WTC11 (cell line): ENCODE measurements at regions of chr4 and their contacts with region 1.

Region 1: GRCh38 chr4:139301113-139301820 is at the start of gene NAA15:
- DNase-seq: peak; percentile 97
- ATAC-seq: peak; percentile 97
- H3K4me3 Mint-ChIP-seq: peak within 1 kb of the TSS; percentile 99
- H3K27ac Mint-ChIP-seq: peak within 1 kb of the TSS; percentile 99
- H3K4me1 Mint-ChIP-seq: peaks cover 35% of the 10 kb centered on the region
- H3K27me3 Mint-ChIP-seq: peaks cover 2% of the 10 kb centered on the region; the same call in 1 of the 2 replicates
- CTCF ChIP-seq: no peak
- total RNA-seq, gene NAA15: 81.4 to 98.9 TPM (median 81.6 TPM) in 3 replicates

Region 2: GRCh38 chr4:138507522-138507921 is 793.7 kb before region 1 on chr4:
- CTCF ChIA-PET with region 1: no interaction called
- POLR2A ChIA-PET with region 1: no interaction called
- DNase-seq: no peak
- ATAC-seq: no peak
- H3K4me3 Mint-ChIP-seq: no peak overlapping the region
- H3K27ac Mint-ChIP-seq: no peak overlapping the region
- H3K4me1 Mint-ChIP-seq: no peaks in the 10 kb centered on the region
- H3K27me3 Mint-ChIP-seq: no peaks in the 10 kb centered on the region
- CTCF ChIP-seq: no peak

Region 3: GRCh38 chr4:139153420-139154133 is 147.7 kb before region 1 on chr4:
- CTCF ChIA-PET with region 1: interaction called, 6 read pairs
- POLR2A ChIA-PET with region 1: interaction called, 10 read pairs
- DNase-seq: no peak
- ATAC-seq: peak; percentile 62
- H3K4me3 Mint-ChIP-seq: peak overlapping the region; percentile 22
- H3K27ac Mint-ChIP-seq: peak overlapping the region; percentile 97
- H3K4me1 Mint-ChIP-seq: peaks cover 68% of the 10 kb centered on the region
- H3K27me3 Mint-ChIP-seq: no peaks in the 10 kb centered on the region
- CTCF ChIP-seq: no peak

Region 4: DNA sequence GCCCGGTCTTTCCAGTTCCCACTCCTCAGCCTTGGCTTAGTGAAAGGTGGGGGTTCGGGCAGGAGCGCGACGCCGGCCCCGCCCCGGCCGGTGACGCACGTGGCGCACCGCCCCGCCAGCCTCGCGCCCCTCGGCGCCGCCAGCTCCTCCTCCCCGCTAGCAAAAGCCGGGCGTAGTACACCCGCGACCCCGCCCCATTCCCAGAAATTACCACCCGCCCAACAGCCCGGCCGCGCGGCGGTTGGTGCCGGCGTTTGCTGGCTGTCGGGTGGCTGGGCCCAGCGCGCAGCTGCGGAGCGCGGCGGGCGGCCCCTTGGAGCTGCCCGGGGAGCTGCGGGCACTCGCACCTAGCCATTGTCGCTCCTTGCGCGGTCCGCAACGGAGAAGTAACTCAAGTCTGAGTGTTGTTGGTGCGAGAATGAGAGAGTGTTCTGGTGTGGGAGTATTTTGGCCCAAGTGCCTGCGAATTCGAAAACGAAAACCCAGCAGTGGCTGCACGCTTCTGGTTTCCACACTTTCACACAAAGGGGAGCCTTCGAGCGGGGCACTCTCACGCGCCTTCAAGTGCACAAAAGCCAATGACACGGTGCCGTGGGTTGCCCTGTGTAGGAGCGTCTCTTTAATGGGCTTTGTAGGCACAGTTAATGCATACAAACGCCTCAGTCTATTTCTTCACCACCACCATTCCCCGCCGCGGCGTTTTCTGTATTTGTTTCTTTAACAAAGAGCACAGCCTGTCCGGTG is 123.2 kb before region 1 on chr4:
- CTCF ChIA-PET with region 1: interaction called, 40 read pairs
- POLR2A ChIA-PET with region 1: interaction called, 59 read pairs
- DNase-seq: peak; percentile 96
- ATAC-seq: peak; percentile 72
- H3K4me3 Mint-ChIP-seq: peak overlapping the region; percentile 77
- H3K27ac Mint-ChIP-seq: peak overlapping the region; percentile 98
- H3K4me1 Mint-ChIP-seq: peaks cover 31% of the 10 kb centered on the region
- H3K27me3 Mint-ChIP-seq: peaks cover 19% of the 10 kb centered on the region
- CTCF ChIP-seq: no peak

Region 5: GRCh38 chr4:139229534-139230039 is 71.7 kb before region 1 on chr4:
- CTCF ChIA-PET with region 1: interaction called, 18 read pairs
- POLR2A ChIA-PET with region 1: interaction called, 8 read pairs
- DNase-seq: no peak
- ATAC-seq: peak; percentile 62
- H3K4me3 Mint-ChIP-seq: no peak overlapping the region
- H3K27ac Mint-ChIP-seq: no peak overlapping the region
- H3K4me1 Mint-ChIP-seq: peaks cover 26% of the 10 kb centered on the region
- H3K27me3 Mint-ChIP-seq: no peaks in the 10 kb centered on the region
- CTCF ChIP-seq: peak; percentile 41

Region 6: GRCh38 chr4:139554893-139555704 is 253.8 kb after region 1 on chr4:
- CTCF ChIA-PET with region 1: no interaction called
- POLR2A ChIA-PET with region 1: no interaction called
- DNase-seq: peak; percentile 71
- ATAC-seq: peak; percentile 12
- H3K4me3 Mint-ChIP-seq: peak overlapping the region; percentile 83
- H3K27ac Mint-ChIP-seq: no peak overlapping the region
- H3K4me1 Mint-ChIP-seq: peaks cover 49% of the 10 kb centered on the region
- H3K27me3 Mint-ChIP-seq: peaks cover 63% of the 10 kb centered on the region
- CTCF ChIP-seq: no peak